CD8-positive, alpha-beta memory T cell (primary cell): ENCODE measurements at regions of chr19 and their contacts with region 1.

Region 1: DNA sequence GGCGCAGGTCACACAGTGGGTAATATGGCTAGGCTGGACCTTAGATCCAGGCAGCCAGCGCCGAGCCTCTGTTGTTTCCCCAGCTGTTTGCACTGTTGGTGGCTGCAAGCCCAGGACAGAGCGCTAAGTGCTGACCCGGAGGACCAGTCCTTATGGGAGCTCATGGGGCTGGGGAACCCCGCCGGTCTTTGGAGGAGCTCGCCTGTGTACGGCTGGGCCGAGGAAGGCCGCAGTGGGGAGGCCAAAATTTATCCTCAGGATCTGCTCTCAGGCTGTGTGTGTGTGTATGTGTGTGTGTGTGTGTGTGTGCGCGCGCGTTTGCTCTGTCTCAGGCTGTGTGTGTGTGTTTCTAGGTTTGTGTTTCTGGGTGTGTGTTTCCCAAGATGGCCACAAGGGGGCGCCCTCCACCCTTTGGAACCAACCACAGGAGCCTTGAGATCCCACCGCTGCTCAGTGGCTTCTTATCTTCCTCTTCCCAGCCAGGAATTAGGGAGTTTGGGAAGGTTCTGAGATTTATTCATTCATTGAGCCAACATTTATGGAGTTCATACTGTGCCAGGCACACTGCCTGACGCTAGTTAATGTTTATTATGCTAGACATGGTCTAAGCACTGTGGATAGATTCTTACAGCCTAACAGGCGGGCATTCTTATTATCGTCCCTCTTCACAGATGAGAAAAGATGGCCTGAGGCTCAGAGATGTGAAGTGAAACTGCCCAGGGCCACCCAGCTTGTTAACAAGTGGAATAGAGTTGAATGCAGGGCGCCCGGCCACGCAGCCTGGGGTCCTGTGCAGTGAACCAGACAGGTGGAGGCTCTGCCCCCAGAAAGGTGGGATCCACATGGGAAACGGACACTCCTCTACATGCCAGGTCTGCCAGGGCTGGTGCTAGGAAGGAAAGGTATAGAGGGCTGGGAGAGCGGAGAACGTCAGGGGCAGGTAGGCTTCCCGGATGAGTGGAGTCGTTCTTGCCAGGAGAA is 13.0 kb downstream of the PGLYRP1 start:
- DNase-seq: peak; percentile 32 to 73 (median 52)
- H3K4me3 ChIP-seq: no peak overlapping the region
- H3K4me3 Mint-ChIP-seq: peak overlapping the region in 1 of 7 donors; percentile 75
- H3K27ac ChIP-seq: no peak overlapping the region
- H3K27ac Mint-ChIP-seq: peak overlapping the region in 2 of 8 donors; percentile 61 to 85
- H3K4me1 ChIP-seq: no peaks in the 10 kb centered on the region
- H3K4me1 Mint-ChIP-seq: peaks cover 5 to 7% (median 6%) of the 10 kb centered on the region in 3 donors
- H3K27me3 ChIP-seq: peaks cover 5% of the 10 kb centered on the region
- H3K27me3 Mint-ChIP-seq: peaks cover 4 to 5% of the 10 kb centered on the region in 2 donors

Region 2: DNA sequence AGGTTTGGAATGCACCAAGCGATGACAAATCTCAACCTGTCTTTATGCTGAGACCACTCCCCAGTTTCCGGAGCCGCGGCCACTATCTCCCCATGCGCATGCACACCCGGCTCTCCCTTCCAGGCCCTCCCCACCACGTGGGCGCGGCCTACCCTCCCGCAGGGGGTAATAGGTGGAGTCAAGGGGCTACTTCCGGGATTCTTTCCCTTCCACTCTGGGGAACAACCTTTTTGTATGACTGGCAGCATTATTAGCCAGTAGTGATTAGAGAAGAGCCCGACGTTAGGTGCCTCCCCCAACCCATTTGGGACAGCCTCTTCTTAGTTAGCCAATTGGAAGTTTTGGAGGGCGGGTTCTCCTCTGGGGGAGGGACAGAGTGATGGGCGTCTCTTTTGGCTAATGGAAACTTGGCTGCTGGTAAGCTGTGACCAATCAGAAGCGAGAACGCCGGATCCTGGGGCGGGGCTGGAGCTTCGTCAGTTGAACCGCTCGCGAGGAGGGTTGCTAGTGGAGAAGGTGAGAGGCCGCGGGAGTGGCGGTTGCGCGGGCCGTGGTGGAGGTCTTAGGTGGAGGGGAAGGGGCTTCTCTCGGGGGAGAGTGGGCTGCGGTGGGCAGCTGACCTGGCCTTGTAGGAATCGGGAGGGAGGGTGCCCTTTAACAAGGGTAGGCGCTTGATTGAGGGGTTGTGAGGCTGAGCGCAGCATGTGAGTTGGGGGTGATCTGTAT is 14.7 kb before region 1 on chr19 and contains the start of gene CCDC61:
- CTCF ChIA-PET with region 1: interaction called, 12 read pairs
- POLR2A ChIA-PET with region 1: no interaction called
- DNase-seq: peak; percentile 92 to 99 (median 97)
- H3K4me3 ChIP-seq: peak within 1 kb of the TSS; percentile 89
- H3K4me3 Mint-ChIP-seq: no peak within 1 kb of the TSS
- H3K27ac ChIP-seq: peak within 1 kb of the TSS; percentile 53
- H3K27ac Mint-ChIP-seq: peak within 1 kb of the TSS in 2 of 8 donors; percentile 53 to 72
- H3K4me1 ChIP-seq: peaks cover 17% of the 10 kb centered on the region
- H3K4me1 Mint-ChIP-seq: peaks cover 15 to 20% (median 20%) of the 10 kb centered on the region in 3 donors
- H3K27me3 ChIP-seq: no peaks in the 10 kb centered on the region
- H3K27me3 Mint-ChIP-seq: peaks cover 7 to 11% of the 10 kb centered on the region in 2 donors
- total RNA-seq, gene CCDC61: 20.0 to 23.3 TPM